ENCODE measurements at regions of chr6 and their contacts with region 1.

Region 1: DNA sequence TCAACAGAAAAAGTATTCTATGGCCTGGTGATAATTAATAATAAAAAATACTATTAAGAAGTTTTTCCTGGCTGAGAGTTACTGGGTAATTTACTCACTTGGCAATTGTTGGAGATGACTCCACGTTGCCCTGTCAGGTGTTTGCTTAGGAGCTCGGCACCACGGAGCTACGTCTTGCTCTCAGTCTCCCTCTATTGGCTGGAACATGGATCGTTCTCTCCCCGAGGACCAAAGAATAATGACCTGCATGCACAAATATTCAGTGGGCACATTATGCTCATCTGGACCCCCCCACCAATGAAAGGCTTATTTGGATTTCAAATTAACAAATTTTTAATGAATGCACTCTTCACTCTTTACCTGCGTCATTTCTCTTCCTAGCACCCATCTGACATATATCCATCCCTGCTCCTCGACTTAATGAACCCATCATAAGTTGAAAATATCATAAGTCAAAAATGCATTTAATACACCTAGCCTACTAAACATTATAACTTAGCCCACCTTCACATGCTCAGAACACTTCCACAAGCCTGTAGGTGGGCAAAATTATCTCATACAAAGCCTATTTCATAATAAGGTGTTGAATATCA is 71.0 kb upstream of the CD83 start:
- DNase-seq: peak; percentile 78
- ATAC-seq: peak; percentile 89
- H3K4me3 ChIP-seq: no peak overlapping the region
- H3K4me3 Mint-ChIP-seq: no peak overlapping the region
- H3K27ac ChIP-seq: no peak overlapping the region
- H3K27ac Mint-ChIP-seq: no peak overlapping the region
- H3K4me1 ChIP-seq: peaks cover 0 to 4% of the 10 kb centered on the region in 2 donors
- H3K4me1 Mint-ChIP-seq: peaks cover 4% of the 10 kb centered on the region
- H3K27me3 ChIP-seq: peaks cover 0 to 2% (median 0%) of the 10 kb centered on the region in 4 experiments
- H3K27me3 Mint-ChIP-seq: peaks cover 9% of the 10 kb centered on the region
- CTCF ChIP-seq: peak; percentile 81

Region 2: DNA sequence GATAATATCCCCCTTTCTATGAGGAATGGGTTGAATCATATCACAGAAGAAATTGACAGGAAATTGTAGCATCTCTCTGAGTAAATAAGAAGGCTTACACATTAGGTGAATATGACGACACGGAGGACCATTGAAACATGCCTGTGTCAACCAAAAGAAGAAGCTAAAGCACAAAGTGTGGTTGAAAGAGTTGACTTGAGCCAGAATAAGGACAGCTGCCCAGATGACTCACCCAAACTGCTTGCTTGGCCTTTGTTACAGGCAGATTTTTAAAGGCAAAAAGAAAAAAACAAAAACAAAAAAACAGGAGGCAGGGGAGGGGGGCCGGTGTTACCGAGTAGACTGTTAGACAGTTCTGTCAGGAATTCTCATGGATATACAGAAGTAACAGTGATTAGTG is 1886.2 kb before region 1 on chr6:
- CTCF ChIA-PET with region 1: no interaction called
- POLR2A ChIA-PET with region 1: no interaction called
- intact Hi-C with region 1: no loop called
- DNase-seq: no peak
- ATAC-seq: no peak
- H3K4me3 ChIP-seq: no peak overlapping the region
- H3K4me3 Mint-ChIP-seq: no peak overlapping the region
- H3K27ac ChIP-seq: no peak overlapping the region
- H3K27ac Mint-ChIP-seq: no peak overlapping the region
- H3K4me1 ChIP-seq: peaks cover 0 to 4% of the 10 kb centered on the region in 2 donors
- H3K4me1 Mint-ChIP-seq: peaks cover 14% of the 10 kb centered on the region
- H3K27me3 ChIP-seq: no peaks in the 10 kb centered on the region
- H3K27me3 Mint-ChIP-seq: no peaks in the 10 kb centered on the region
- CTCF ChIP-seq: no peak

Region 3: GRCh38 chr6:13795041-13795750 is 251.4 kb before region 1 on chr6:
- CTCF ChIA-PET with region 1: interaction called, 4 read pairs
- POLR2A ChIA-PET with region 1: no interaction called
- intact Hi-C with region 1: loop called (anchors 1 kb)
- DNase-seq: peak; percentile 81
- ATAC-seq: peak; percentile 91
- H3K4me3 ChIP-seq: no peak overlapping the region
- H3K4me3 Mint-ChIP-seq: no peak overlapping the region
- H3K27ac ChIP-seq: no peak overlapping the region
- H3K27ac Mint-ChIP-seq: no peak overlapping the region
- H3K4me1 ChIP-seq: no peaks in the 10 kb centered on the region
- H3K4me1 Mint-ChIP-seq: peaks cover 2% of the 10 kb centered on the region
- H3K27me3 ChIP-seq: no peaks in the 10 kb centered on the region
- H3K27me3 Mint-ChIP-seq: no peaks in the 10 kb centered on the region
- CTCF ChIP-seq: peak; percentile 93

Region 4: DNA sequence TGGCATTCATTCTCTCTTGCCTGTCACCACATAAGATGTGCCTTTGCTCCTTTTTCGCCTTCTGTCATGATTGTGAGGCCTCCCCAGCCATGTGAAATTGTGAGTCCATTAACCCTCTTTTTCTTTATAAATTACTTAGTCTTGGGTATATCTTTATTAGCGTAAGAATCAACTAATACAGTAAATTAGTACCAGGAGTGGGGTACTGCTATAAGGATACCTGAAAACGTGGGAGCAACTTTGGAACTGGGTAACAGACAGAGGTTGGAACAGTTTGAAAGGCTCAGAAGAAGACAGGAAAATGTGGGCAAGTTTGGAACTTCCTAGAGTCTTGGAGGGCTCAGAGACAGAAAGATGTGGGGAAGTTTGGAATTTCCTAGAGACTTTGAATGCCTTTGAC is 75.3 kb before region 1 on chr6:
- CTCF ChIA-PET with region 1: no interaction called
- POLR2A ChIA-PET with region 1: no interaction called
- intact Hi-C with region 1: no loop called
- DNase-seq: no peak
- ATAC-seq: no peak
- H3K4me3 ChIP-seq: no peak overlapping the region
- H3K4me3 Mint-ChIP-seq: no peak overlapping the region
- H3K27ac ChIP-seq: no peak overlapping the region
- H3K27ac Mint-ChIP-seq: no peak overlapping the region
- H3K4me1 ChIP-seq: no peaks in the 10 kb centered on the region
- H3K4me1 Mint-ChIP-seq: no peaks in the 10 kb centered on the region
- H3K27me3 ChIP-seq: peaks cover 0 to 7% (median 1%) of the 10 kb centered on the region in 4 experiments
- H3K27me3 Mint-ChIP-seq: peaks cover 32% of the 10 kb centered on the region
- CTCF ChIP-seq: no peak

Region 5: GRCh38 chr6:14108571-14109410 is 62.2 kb after region 1 on chr6:
- CTCF ChIA-PET with region 1: interaction called, 16 read pairs
- POLR2A ChIA-PET with region 1: no interaction called
- intact Hi-C with region 1: no loop called
- DNase-seq: peak; percentile 95
- ATAC-seq: peak; percentile 81
- H3K4me3 ChIP-seq: peak overlapping the region in 3 of 5 experiments; percentile 26 to 55 (median 40)
- H3K4me3 Mint-ChIP-seq: peak overlapping the region; percentile 85
- H3K27ac ChIP-seq: peak overlapping the region; percentile 93 to 99
- H3K27ac Mint-ChIP-seq: peak overlapping the region; percentile 96
- H3K4me1 ChIP-seq: peaks cover 45 to 50% of the 10 kb centered on the region in 2 donors
- H3K4me1 Mint-ChIP-seq: peaks cover 64% of the 10 kb centered on the region
- H3K27me3 ChIP-seq: no peaks in the 10 kb centered on the region
- H3K27me3 Mint-ChIP-seq: no peaks in the 10 kb centered on the region
- CTCF ChIP-seq: no peak

Region 6: GRCh38 chr6:14123386-14124111 is 77.0 kb after region 1 on chr6:
- CTCF ChIA-PET with region 1: interaction called, 20 read pairs
- POLR2A ChIA-PET with region 1: interaction called, 3 read pairs
- intact Hi-C with region 1: no loop called
- DNase-seq: peak; percentile 85
- ATAC-seq: peak; percentile 6
- H3K4me3 ChIP-seq: peak overlapping the region in 2 of 5 experiments; percentile 19 to 35
- H3K4me3 Mint-ChIP-seq: peak overlapping the region; percentile 90
- H3K27ac ChIP-seq: peak overlapping the region; percentile 98 to 99
- H3K27ac Mint-ChIP-seq: peak overlapping the region; percentile 91
- H3K4me1 ChIP-seq: peaks cover 97% of the 10 kb centered on the region in 2 donors
- H3K4me1 Mint-ChIP-seq: peaks cover 76% of the 10 kb centered on the region
- H3K27me3 ChIP-seq: no peaks in the 10 kb centered on the region
- H3K27me3 Mint-ChIP-seq: no peaks in the 10 kb centered on the region
- CTCF ChIP-seq: no peak

Region 7: DNA sequence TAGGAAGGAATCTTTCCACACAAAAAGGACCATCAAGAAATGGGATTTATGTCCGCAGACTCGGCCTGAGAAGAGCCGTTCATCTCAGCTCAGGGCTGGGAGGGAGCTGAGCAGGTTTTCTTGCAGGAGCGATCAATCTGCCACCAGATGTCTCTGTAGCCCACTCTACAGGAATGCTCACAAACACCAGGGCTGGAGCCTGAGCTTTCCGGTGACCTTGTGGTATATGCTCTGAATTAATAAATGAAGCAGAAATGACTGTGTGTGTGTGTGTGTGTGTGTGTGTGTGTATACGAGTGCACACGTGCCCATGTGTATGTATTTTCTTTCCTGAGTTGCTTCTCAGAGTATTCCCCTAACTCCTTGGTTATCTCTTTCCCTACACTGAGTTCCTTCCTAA is 83.0 kb after region 1 on chr6:
- CTCF ChIA-PET with region 1: interaction called, 20 read pairs
- POLR2A ChIA-PET with region 1: no interaction called
- intact Hi-C with region 1: no loop called
- DNase-seq: peak; percentile 69
- ATAC-seq: no peak
- H3K4me3 ChIP-seq: peak overlapping the region in 1 of 5 experiments; percentile 15
- H3K4me3 Mint-ChIP-seq: peak overlapping the region; percentile 82
- H3K27ac ChIP-seq: peak overlapping the region in 1 of 2 donors; percentile 43
- H3K27ac Mint-ChIP-seq: peak overlapping the region; percentile 80
- H3K4me1 ChIP-seq: peaks cover 78 to 90% of the 10 kb centered on the region in 2 donors
- H3K4me1 Mint-ChIP-seq: peaks cover 93% of the 10 kb centered on the region
- H3K27me3 ChIP-seq: no peaks in the 10 kb centered on the region
- H3K27me3 Mint-ChIP-seq: no peaks in the 10 kb centered on the region
- CTCF ChIP-seq: no peak

Region 8: DNA sequence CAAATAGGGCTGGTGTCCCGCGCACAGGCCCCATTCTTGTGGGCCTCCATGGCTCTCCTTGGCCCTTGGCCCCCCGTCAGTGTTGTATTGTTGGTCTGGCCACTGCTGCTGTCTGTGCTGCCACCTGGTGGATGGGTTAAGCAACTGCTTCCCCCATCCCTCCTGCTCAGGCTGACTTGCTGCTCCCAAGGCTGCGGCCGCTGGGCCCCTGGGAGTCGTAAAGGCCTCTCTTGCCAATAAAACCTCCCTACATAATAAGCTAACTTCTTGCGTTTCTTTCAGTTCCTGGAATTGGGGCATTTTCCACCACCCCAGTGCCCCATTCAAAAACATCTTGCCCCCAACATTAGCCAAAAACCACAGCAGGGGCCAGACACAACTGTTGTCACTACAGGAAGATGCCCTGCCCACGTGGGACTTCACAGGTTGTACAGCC is 98.1 kb after region 1 on chr6:
- CTCF ChIA-PET with region 1: interaction called, 23 read pairs
- POLR2A ChIA-PET with region 1: no interaction called
- intact Hi-C with region 1: loop called (anchors 1 kb)
- DNase-seq: peak; percentile 85
- ATAC-seq: peak; percentile 83
- H3K4me3 ChIP-seq: no peak overlapping the region
- H3K4me3 Mint-ChIP-seq: no peak overlapping the region
- H3K27ac ChIP-seq: no peak overlapping the region
- H3K27ac Mint-ChIP-seq: peak overlapping the region; percentile 8
- H3K4me1 ChIP-seq: peaks cover 17 to 18% of the 10 kb centered on the region in 2 donors
- H3K4me1 Mint-ChIP-seq: peaks cover 59% of the 10 kb centered on the region
- H3K27me3 ChIP-seq: no peaks in the 10 kb centered on the region
- H3K27me3 Mint-ChIP-seq: no peaks in the 10 kb centered on the region
- CTCF ChIP-seq: peak; percentile 91

Measured in B cell (primary cell).